ENCODE measurements at regions of chr16 and their contacts with region 1.

Region 1: GRCh38 chr16:86519649-86520316 is 9.5 kb downstream of the FOXF1 start:
- DNase-seq: peak; percentile 62
- ATAC-seq: peak; percentile 34 to 39

Region 2: GRCh38 chr16:85821441-85822135 is 698.2 kb before region 1 on chr16:
- intact Hi-C with region 1: loop called in 1 of 2 experiments (anchors 5 kb)
- DNase-seq: peak; percentile 79
- ATAC-seq: peak; percentile 90 to 91

Region 3: GRCh38 chr16:86072328-86073102 is 447.3 kb before region 1 on chr16:
- intact Hi-C with region 1: loop called (anchors 2 kb)
- DNase-seq: peak; percentile 71
- ATAC-seq: peak in 1 of 2 donors; percentile 46

Region 4: GRCh38 chr16:86252596-86252995 is 267.2 kb before region 1 on chr16:
- intact Hi-C with region 1: loop called in 1 of 2 experiments (anchors 5 kb)
- DNase-seq: no peak
- ATAC-seq: no peak

Region 5: DNA sequence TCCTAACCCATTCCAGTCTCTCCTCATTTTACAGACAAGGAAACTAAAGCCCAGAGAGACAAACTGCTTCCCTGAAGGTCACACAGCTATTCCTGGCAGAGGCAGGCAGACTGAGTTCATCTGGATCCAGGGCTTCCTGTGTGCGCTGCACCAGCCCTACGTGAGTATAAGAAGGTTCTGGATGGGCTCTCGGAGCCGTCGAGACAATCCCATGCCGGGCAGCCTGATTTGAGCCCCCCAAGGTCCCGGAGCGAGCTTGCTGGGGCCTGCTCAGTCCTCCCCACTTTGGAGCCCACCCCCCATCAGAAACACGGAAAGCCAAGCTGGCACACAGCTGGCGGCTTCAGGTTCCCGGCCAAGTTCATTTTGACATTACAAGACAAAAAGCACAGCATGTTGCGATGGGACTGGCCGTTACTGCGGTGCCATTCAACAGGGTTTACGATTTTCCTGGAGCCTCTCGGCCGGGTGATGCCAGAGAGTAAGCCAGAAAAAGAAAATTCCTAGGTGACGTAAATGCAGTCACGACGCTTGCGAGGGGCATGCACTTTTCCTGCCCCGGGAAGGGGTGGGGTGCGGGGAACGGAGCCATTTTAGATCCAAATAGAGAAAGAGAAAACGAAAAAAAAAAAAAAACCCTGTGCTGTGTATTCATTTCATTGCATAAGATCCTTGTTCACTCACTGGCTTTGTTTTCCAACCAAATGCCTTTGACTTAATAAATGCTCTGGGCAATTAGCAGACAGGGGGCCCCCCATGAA is 176.6 kb before region 1 on chr16:
- intact Hi-C with region 1: loop called (anchors 5 kb)
- DNase-seq: peak; percentile 63
- ATAC-seq: peak; percentile 52 to 53

Region 6: GRCh38 chr16:86491256-86492023 is 28.3 kb before region 1 on chr16:
- intact Hi-C with region 1: no loop called
- DNase-seq: no peak
- ATAC-seq: no peak